ENCODE measurements at regions of chr7 and their contacts with region 1.

Region 1: DNA sequence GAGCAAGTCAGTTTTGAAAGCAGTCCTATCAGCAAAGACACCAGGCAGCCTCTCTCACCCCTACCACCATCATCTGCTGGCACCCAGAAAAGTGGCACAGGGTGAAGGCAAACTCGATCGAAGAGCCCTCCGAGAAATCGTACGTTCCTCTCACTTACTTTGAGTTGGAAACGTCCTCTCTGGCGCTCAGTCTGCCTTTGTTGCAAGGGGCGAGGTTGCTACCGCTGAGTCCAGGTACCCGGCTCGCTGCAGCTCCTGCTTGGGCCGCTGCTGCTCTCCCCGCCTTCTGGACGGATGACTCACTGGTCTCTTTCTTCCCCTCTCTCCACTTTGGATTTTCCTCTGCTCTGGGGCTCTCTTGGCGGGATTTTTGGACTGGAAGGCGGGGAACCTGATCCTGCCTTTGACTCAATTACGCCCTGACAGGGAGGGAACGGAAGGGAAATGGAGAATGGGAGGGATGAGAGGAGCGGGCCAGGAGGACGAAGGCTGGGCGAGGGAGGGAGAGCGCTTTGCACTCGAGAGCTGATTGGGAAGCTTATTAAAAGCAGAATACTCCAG is at the start of gene PTN:
- DNase-seq: peak; percentile 27 to 38
- ATAC-seq: peak; percentile 80 to 93 (median 86)
- H3K4me3 ChIP-seq: peak within 1 kb of the TSS; percentile 12 to 60 (median 51)
- H3K27ac ChIP-seq: peak within 1 kb of the TSS in 3 of 10 donors; percentile 15 to 23 (median 17)
- H3K4me1 ChIP-seq: peaks cover 0 to 6% (median 0%) of the 10 kb centered on the region in 9 donors
- H3K27me3 ChIP-seq: peaks cover 0 to 8% (median 0%) of the 10 kb centered on the region in 7 donors
- CTCF ChIP-seq: no peak
- total RNA-seq, gene PTN: 6.6 to 22.4 (median 12.9) TPM

Region 2: DNA sequence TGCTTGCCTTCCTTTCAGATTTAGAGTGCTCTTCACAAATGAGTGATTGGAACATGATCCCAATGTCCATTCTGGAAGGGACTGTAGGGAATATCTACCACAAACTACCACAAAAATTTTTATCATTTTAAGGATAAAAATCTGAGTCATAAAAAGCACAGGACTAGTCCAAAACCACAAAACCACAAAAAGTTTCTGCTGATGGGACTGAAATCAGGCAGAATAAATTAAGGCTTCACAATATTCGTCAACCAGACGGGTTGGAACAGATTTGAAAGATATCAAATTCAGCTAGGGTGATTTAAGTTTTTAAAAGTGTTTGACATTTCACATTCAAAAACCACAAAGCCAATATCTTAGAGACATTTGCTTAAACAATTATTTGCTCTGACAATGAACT is 100.3 kb after region 1 on chr7:
- intact Hi-C with region 1: loop called in 1 of 10 experiments (anchors 10 kb)
- DNase-seq: no peak
- ATAC-seq: no peak
- H3K4me3 ChIP-seq: no peak overlapping the region
- H3K27ac ChIP-seq: peak overlapping the region in 2 of 10 donors; percentile 5 to 16
- H3K4me1 ChIP-seq: peaks cover 0 to 6% (median 0%) of the 10 kb centered on the region in 9 donors
- H3K27me3 ChIP-seq: no peaks in the 10 kb centered on the region
- CTCF ChIP-seq: no peak